ENCODE measurements at regions of chr11 and their contacts with region 1.

Region 1: GRCh38 chr11:78564490-78565467 is 9.9 kb downstream of the NARS2 start:
- DNase-seq: peak; percentile 36
- H3K4me3 ChIP-seq: no peak overlapping the region; a peak in 1 of 4 replicates
- H3K27ac ChIP-seq: peak overlapping the region in 1 of 2 experiments; percentile 77; a peak in 2 of 4 replicates
- H3K4me1 ChIP-seq: peaks cover 16 to 45% of the 10 kb centered on the region in 2 experiments; a peak in 3 of 4 replicates
- H3K27me3 ChIP-seq: no peaks in the 10 kb centered on the region
- CTCF ChIP-seq: peak; percentile 88
- EP300 ChIP-seq: no peak
- RAD21 ChIP-seq: peak; percentile 85

Region 2: GRCh38 chr11:78223320-78223954 is 341.3 kb before region 1 on chr11:
- CTCF ChIA-PET with region 1: interaction called, 19 read pairs
- POLR2A ChIA-PET with region 1: interaction called, 4 read pairs
- DNase-seq: no peak
- H3K4me3 ChIP-seq: no peak overlapping the region
- H3K27ac ChIP-seq: peak overlapping the region in 1 of 2 experiments; percentile 9; a peak in 1 of 4 replicates
- H3K4me1 ChIP-seq: peaks cover 0 to 7% of the 10 kb centered on the region in 2 experiments; a peak in 1 of 4 replicates
- H3K27me3 ChIP-seq: no peaks in the 10 kb centered on the region
- CTCF ChIP-seq: no peak
- EP300 ChIP-seq: no peak
- RAD21 ChIP-seq: no peak

Region 3: GRCh38 chr11:78350646-78351165 is 214.1 kb before region 1 on chr11:
- CTCF ChIA-PET with region 1: interaction called, 12 read pairs
- POLR2A ChIA-PET with region 1: interaction called, 3 read pairs
- DNase-seq: no peak
- H3K4me3 ChIP-seq: peak overlapping the region in 1 of 2 experiments; percentile 14; a peak in 1 of 4 replicates
- H3K27ac ChIP-seq: peak overlapping the region in 1 of 2 experiments; percentile 91; a peak in 3 of 4 replicates
- H3K4me1 ChIP-seq: peaks cover 50 to 61% of the 10 kb centered on the region in 2 experiments; a peak in 3 of 4 replicates
- H3K27me3 ChIP-seq: no peaks in the 10 kb centered on the region
- CTCF ChIP-seq: no peak
- EP300 ChIP-seq: no peak
- RAD21 ChIP-seq: no peak

Region 4: DNA sequence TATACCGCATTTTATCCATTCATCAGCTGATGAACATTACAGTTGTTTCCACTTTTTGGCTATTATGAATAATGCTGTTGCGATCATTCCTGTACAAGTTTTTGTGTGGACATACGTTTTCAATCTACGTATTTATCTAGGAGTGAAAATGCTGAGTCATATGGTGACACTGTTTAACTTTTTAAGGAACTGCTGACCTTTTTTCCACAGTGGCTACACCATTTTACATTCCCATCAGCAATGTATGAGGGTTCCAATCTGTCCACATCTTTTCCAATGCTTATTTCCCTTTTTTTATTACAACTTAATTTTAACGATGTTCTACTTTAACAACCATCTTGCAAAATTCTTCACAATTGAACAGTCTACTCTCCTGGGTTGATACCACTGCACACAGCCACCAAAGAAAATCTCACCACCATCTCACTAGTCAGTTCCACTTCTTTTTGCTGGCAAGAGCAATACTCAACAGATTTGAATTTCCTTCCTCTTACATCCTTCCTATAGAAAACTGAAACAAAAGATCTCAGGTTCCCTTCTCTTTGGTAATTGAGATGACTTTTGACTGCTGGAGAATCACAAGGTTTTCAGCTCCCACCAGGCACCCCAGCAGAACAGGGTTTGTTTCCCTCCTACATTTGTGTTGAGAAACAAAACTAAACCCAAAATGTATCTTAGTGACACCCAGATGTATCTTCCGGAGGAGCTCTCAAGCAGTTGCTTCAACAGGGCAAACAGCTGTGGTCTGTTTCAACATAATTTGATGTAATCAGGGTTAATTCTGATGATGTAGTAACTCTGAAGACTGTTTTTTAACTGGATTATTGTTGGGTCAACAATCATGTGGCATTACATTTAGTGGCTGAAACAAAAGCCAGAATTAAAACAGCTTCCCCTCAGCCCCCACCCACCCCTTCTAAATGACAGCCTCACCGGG is 140.2 kb before region 1 on chr11:
- CTCF ChIA-PET with region 1: interaction called, 110 read pairs
- POLR2A ChIA-PET with region 1: interaction called, 7 read pairs
- DNase-seq: peak; percentile 59
- H3K4me3 ChIP-seq: no peak overlapping the region; a peak in 1 of 4 replicates
- H3K27ac ChIP-seq: peak overlapping the region; percentile 34 to 100; a peak in 3 of 4 replicates
- H3K4me1 ChIP-seq: peaks cover 25 to 68% of the 10 kb centered on the region in 2 experiments
- H3K27me3 ChIP-seq: no peaks in the 10 kb centered on the region
- CTCF ChIP-seq: no peak
- EP300 ChIP-seq: peak in 1 of 2 experiments; percentile 98; a peak in 2 of 4 replicates
- RAD21 ChIP-seq: no peak; the same call in 1 of the 2 replicates

Region 5: GRCh38 chr11:78548911-78549590 is 15.7 kb before region 1 on chr11:
- CTCF ChIA-PET with region 1: interaction called, 22 read pairs
- POLR2A ChIA-PET with region 1: no interaction called
- DNase-seq: no peak
- H3K4me3 ChIP-seq: no peak overlapping the region
- H3K27ac ChIP-seq: no peak overlapping the region
- H3K4me1 ChIP-seq: peaks cover 0 to 3% of the 10 kb centered on the region in 2 experiments; a peak in 1 of 4 replicates
- H3K27me3 ChIP-seq: no peaks in the 10 kb centered on the region
- CTCF ChIP-seq: no peak
- EP300 ChIP-seq: no peak
- RAD21 ChIP-seq: no peak

Measured in SK-N-SH (cell line).